B cell (primary cell): ENCODE measurements at regions of chr2 and their contacts with region 1.

Region 1: DNA sequence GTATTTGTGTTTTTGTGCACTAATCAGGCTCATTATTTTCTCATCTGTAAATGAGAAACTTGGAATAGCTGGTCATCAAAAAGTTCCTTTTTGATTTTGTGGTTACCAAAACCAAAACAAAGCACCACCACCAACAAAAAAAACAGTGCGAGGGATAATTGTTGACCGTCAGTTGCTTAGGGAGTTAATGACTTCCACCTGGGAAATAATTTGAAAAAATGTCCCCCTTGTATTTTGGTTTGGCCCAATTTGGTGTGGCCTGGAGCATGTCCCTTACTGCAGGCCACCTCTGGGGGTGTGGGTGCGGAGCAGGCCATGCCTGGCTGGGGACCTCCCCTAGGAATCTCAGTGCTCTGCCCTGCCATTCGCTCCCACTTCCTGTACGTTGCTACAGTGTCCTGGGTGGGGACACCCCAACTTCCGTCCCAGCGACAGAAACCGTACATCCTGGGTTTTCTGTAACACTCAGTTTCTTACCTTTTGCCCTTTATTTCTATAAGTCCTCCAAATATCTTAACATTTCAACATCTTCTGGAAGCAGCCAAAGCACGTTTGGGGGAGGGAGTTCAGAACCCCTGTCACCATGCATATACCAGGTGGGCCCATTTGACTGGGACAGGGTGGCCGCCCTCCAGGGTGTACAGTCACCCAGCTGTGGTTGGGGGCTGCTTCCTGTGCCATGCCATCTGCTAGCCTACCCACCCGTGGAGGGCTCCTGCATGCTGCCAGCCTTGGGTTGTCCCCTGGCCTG is 31.3 kb downstream of the NCK2 start:
- DNase-seq: peak; percentile 91
- ATAC-seq: peak; percentile 95
- H3K4me3 ChIP-seq: peak overlapping the region in 1 of 5 experiments; percentile 10
- H3K4me3 Mint-ChIP-seq: peak overlapping the region; percentile 60
- H3K27ac ChIP-seq: peak overlapping the region; percentile 91 to 95
- H3K27ac Mint-ChIP-seq: peak overlapping the region; percentile 87
- H3K4me1 ChIP-seq: peaks cover 73 to 83% of the 10 kb centered on the region in 2 donors
- H3K4me1 Mint-ChIP-seq: peaks cover 81% of the 10 kb centered on the region
- H3K27me3 ChIP-seq: no peaks in the 10 kb centered on the region
- H3K27me3 Mint-ChIP-seq: no peaks in the 10 kb centered on the region
- CTCF ChIP-seq: no peak

Region 2: GRCh38 chr2:105139556-105140239 is 636.3 kb before region 1 on chr2:
- CTCF ChIA-PET with region 1: no interaction called
- POLR2A ChIA-PET with region 1: no interaction called
- intact Hi-C with region 1: no loop called
- DNase-seq: no peak
- ATAC-seq: no peak
- H3K4me3 ChIP-seq: no peak overlapping the region
- H3K4me3 Mint-ChIP-seq: no peak overlapping the region
- H3K27ac ChIP-seq: no peak overlapping the region
- H3K27ac Mint-ChIP-seq: no peak overlapping the region
- H3K4me1 ChIP-seq: peaks cover 9 to 16% of the 10 kb centered on the region in 2 donors
- H3K4me1 Mint-ChIP-seq: peaks cover 24% of the 10 kb centered on the region
- H3K27me3 ChIP-seq: peaks cover 0 to 5% (median 0%) of the 10 kb centered on the region in 4 experiments
- H3K27me3 Mint-ChIP-seq: no peaks in the 10 kb centered on the region
- CTCF ChIP-seq: no peak

Region 3: GRCh38 chr2:105576440-105577252 is 199.3 kb before region 1 on chr2:
- CTCF ChIA-PET with region 1: interaction called, 12 read pairs
- POLR2A ChIA-PET with region 1: no interaction called
- intact Hi-C with region 1: no loop called
- DNase-seq: peak; percentile 53
- ATAC-seq: no peak
- H3K4me3 ChIP-seq: no peak overlapping the region
- H3K4me3 Mint-ChIP-seq: no peak overlapping the region
- H3K27ac ChIP-seq: no peak overlapping the region
- H3K27ac Mint-ChIP-seq: peak overlapping the region; percentile 42
- H3K4me1 ChIP-seq: peaks cover 0 to 2% of the 10 kb centered on the region in 2 donors
- H3K4me1 Mint-ChIP-seq: peaks cover 5% of the 10 kb centered on the region
- H3K27me3 ChIP-seq: peaks cover 0 to 9% (median 0%) of the 10 kb centered on the region in 4 experiments
- H3K27me3 Mint-ChIP-seq: peaks cover 24% of the 10 kb centered on the region
- CTCF ChIP-seq: peak; percentile 72

Region 4: GRCh38 chr2:105645031-105645937 is 130.7 kb before region 1 on chr2:
- CTCF ChIA-PET with region 1: no interaction called
- POLR2A ChIA-PET with region 1: no interaction called
- intact Hi-C with region 1: no loop called
- DNase-seq: no peak
- ATAC-seq: no peak
- H3K4me3 ChIP-seq: no peak overlapping the region
- H3K4me3 Mint-ChIP-seq: no peak overlapping the region
- H3K27ac ChIP-seq: no peak overlapping the region
- H3K27ac Mint-ChIP-seq: no peak overlapping the region
- H3K4me1 ChIP-seq: no peaks in the 10 kb centered on the region
- H3K4me1 Mint-ChIP-seq: peaks cover 4% of the 10 kb centered on the region
- H3K27me3 ChIP-seq: peaks cover 0 to 3% (median 0%) of the 10 kb centered on the region in 4 experiments
- H3K27me3 Mint-ChIP-seq: peaks cover 25% of the 10 kb centered on the region
- CTCF ChIP-seq: no peak

Region 5: GRCh38 chr2:105744091-105744908 is 31.7 kb before region 1 on chr2:
- CTCF ChIA-PET with region 1: interaction called, 9 read pairs
- POLR2A ChIA-PET with region 1: interaction called, 14 read pairs
- intact Hi-C with region 1: loop called (anchors 1 kb)
- DNase-seq: peak; percentile 82
- ATAC-seq: peak; percentile 90
- H3K4me3 ChIP-seq: peak overlapping the region; percentile 42 to 63 (median 43)
- H3K4me3 Mint-ChIP-seq: peak overlapping the region; percentile 87
- H3K27ac ChIP-seq: peak overlapping the region; percentile 69 to 75
- H3K27ac Mint-ChIP-seq: peak overlapping the region; percentile 92
- H3K4me1 ChIP-seq: peaks cover 56 to 61% of the 10 kb centered on the region in 2 donors
- H3K4me1 Mint-ChIP-seq: peaks cover 71% of the 10 kb centered on the region
- H3K27me3 ChIP-seq: no peaks in the 10 kb centered on the region
- H3K27me3 Mint-ChIP-seq: no peaks in the 10 kb centered on the region
- CTCF ChIP-seq: no peak

Region 6: GRCh38 chr2:105755895-105756294 is 20.1 kb before region 1 on chr2:
- CTCF ChIA-PET with region 1: interaction called, 5 read pairs
- POLR2A ChIA-PET with region 1: interaction called, 5 read pairs
- intact Hi-C with region 1: loop called (anchors 1 kb)
- DNase-seq: peak; percentile 35
- ATAC-seq: peak; percentile 25
- H3K4me3 ChIP-seq: no peak overlapping the region
- H3K4me3 Mint-ChIP-seq: peak overlapping the region; percentile 69
- H3K27ac ChIP-seq: peak overlapping the region; percentile 54 to 60
- H3K27ac Mint-ChIP-seq: peak overlapping the region; percentile 62
- H3K4me1 ChIP-seq: peaks cover 80% of the 10 kb centered on the region in 2 donors
- H3K4me1 Mint-ChIP-seq: peaks cover 88% of the 10 kb centered on the region
- H3K27me3 ChIP-seq: no peaks in the 10 kb centered on the region
- H3K27me3 Mint-ChIP-seq: no peaks in the 10 kb centered on the region
- CTCF ChIP-seq: no peak

Region 7: GRCh38 chr2:105789745-105790460 is 13.9 kb after region 1 on chr2:
- CTCF ChIA-PET with region 1: interaction called, 47 read pairs
- POLR2A ChIA-PET with region 1: interaction called, 9 read pairs
- intact Hi-C with region 1: loop called (anchors 1 kb)
- DNase-seq: peak; percentile 55
- ATAC-seq: peak; percentile 65
- H3K4me3 ChIP-seq: peak overlapping the region in 2 of 5 experiments; percentile 18 to 26
- H3K4me3 Mint-ChIP-seq: peak overlapping the region; percentile 77
- H3K27ac ChIP-seq: peak overlapping the region; percentile 64 to 78
- H3K27ac Mint-ChIP-seq: peak overlapping the region; percentile 91
- H3K4me1 ChIP-seq: peaks cover 76 to 86% of the 10 kb centered on the region in 2 donors
- H3K4me1 Mint-ChIP-seq: peaks cover 83% of the 10 kb centered on the region
- H3K27me3 ChIP-seq: no peaks in the 10 kb centered on the region
- H3K27me3 Mint-ChIP-seq: no peaks in the 10 kb centered on the region
- CTCF ChIP-seq: peak; percentile 41

Region 8: GRCh38 chr2:105802587-105802986 is 26.6 kb after region 1 on chr2:
- CTCF ChIA-PET with region 1: interaction called, 9 read pairs
- POLR2A ChIA-PET with region 1: interaction called, 11 read pairs
- intact Hi-C with region 1: loop called (anchors 1 kb)
- DNase-seq: peak; percentile 86
- ATAC-seq: peak; percentile 75
- H3K4me3 ChIP-seq: peak overlapping the region in 1 of 5 experiments; percentile 16
- H3K4me3 Mint-ChIP-seq: peak overlapping the region; percentile 66
- H3K27ac ChIP-seq: peak overlapping the region; percentile 86 to 92
- H3K27ac Mint-ChIP-seq: peak overlapping the region; percentile 94
- H3K4me1 ChIP-seq: peaks cover 81 to 84% of the 10 kb centered on the region in 2 donors
- H3K4me1 Mint-ChIP-seq: peaks cover 85% of the 10 kb centered on the region
- H3K27me3 ChIP-seq: no peaks in the 10 kb centered on the region
- H3K27me3 Mint-ChIP-seq: no peaks in the 10 kb centered on the region
- CTCF ChIP-seq: no peak

Region 9: DNA sequence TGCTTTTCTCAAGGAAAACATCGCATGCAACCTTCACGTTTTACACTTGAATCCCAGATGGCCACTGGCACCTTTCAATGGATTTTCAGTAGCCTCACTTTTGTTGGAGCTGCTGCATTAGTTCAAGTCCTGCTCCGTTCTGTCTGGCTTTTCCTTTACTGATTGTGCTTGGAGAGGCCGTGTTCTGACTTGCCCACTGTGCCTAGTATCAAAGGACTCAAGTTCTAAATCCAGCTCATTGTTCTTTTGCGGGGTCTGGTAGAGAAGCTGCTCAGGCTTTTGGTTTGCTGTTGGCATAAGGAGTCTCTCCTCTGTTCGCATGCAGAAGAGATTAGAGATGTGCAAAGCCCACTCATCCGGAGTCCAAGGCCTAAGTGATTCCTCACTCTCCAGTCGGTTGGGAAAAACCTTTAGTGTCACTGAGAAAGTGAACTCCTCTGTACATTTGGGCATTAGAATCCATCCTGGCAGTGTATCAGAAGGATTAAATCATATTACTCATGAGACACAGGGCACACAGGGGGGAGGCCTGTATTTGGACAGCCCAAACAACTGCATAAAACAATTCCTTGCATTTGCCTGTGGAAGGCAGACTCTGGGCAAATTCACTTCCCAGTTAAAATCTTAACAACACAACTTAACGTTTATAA is 38.4 kb after region 1 on chr2:
- CTCF ChIA-PET with region 1: no interaction called
- POLR2A ChIA-PET with region 1: no interaction called
- intact Hi-C with region 1: no loop called
- DNase-seq: no peak
- ATAC-seq: no peak
- H3K4me3 ChIP-seq: no peak overlapping the region
- H3K4me3 Mint-ChIP-seq: no peak overlapping the region
- H3K27ac ChIP-seq: no peak overlapping the region
- H3K27ac Mint-ChIP-seq: peak overlapping the region; percentile 59
- H3K4me1 ChIP-seq: peaks cover 17 to 40% of the 10 kb centered on the region in 2 donors
- H3K4me1 Mint-ChIP-seq: peaks cover 56% of the 10 kb centered on the region
- H3K27me3 ChIP-seq: no peaks in the 10 kb centered on the region
- H3K27me3 Mint-ChIP-seq: no peaks in the 10 kb centered on the region
- CTCF ChIP-seq: no peak

Region 10: GRCh38 chr2:105834931-105835330 is 58.9 kb after region 1 on chr2:
- CTCF ChIA-PET with region 1: no interaction called
- POLR2A ChIA-PET with region 1: no interaction called
- intact Hi-C with region 1: loop called (anchors 1 kb)
- DNase-seq: peak; percentile 83
- ATAC-seq: peak; percentile 83
- H3K4me3 ChIP-seq: peak overlapping the region in 2 of 5 experiments; percentile 13 to 46
- H3K4me3 Mint-ChIP-seq: peak overlapping the region; percentile 30
- H3K27ac ChIP-seq: peak overlapping the region; percentile 90 to 92
- H3K27ac Mint-ChIP-seq: peak overlapping the region; percentile 78
- H3K4me1 ChIP-seq: peaks cover 44 to 49% of the 10 kb centered on the region in 2 donors
- H3K4me1 Mint-ChIP-seq: peaks cover 65% of the 10 kb centered on the region
- H3K27me3 ChIP-seq: no peaks in the 10 kb centered on the region
- H3K27me3 Mint-ChIP-seq: no peaks in the 10 kb centered on the region
- CTCF ChIP-seq: no peak